Sigmoid colon (tissue), 7 donors: ENCODE measurements at regions of chr11 and their contacts with region 1.

Region 1: GRCh38 chr11:59753650-59754493 is 1.3 kb upstream of the STX3 start:
- DNase-seq: peak; percentile 92
- H3K4me3 ChIP-seq: peak overlapping the region; percentile 67 to 92 (median 76)
- H3K27ac ChIP-seq: peak overlapping the region; percentile 86 to 94 (median 91)
- H3K4me1 ChIP-seq: peaks cover 0 to 22% (median 16%) of the 10 kb centered on the region in 4 donors
- H3K27me3 ChIP-seq: no peaks in the 10 kb centered on the region
- CTCF ChIP-seq: peak; percentile 79 to 94 (median 92)
- EP300 ChIP-seq: no peak
- POLR2A ChIP-seq: no peak

Region 2: DNA sequence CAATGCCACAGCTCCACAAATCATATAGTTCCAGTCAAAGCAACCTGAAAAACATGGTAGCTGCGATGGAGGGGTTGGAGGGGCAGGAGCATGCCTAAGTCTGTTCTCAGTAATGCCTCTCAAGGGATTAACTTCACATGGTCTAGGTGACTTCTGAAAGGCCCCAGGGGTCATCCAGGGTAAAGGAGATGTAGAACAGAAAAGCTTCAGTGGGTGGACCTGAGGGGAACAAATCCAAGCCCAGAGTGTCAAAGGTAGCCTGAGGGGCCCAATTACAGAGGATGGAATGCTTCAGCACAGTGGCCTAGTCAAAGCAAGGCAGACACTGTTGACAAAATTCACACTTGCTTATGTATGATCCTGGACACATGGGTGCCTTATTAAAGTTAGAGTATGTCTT is 219.2 kb before region 1 on chr11:
- intact Hi-C with region 1: loop called (anchors 5 kb)
- DNase-seq: no peak
- H3K4me3 ChIP-seq: no peak overlapping the region
- H3K27ac ChIP-seq: no peak overlapping the region
- H3K4me1 ChIP-seq: peaks cover 0 to 14% (median 7%) of the 10 kb centered on the region in 4 donors
- H3K27me3 ChIP-seq: no peaks in the 10 kb centered on the region
- CTCF ChIP-seq: no peak
- EP300 ChIP-seq: no peak
- POLR2A ChIP-seq: no peak

Region 3: GRCh38 chr11:59641156-59641555 is 112.7 kb before region 1 on chr11:
- intact Hi-C with region 1: no loop called
- DNase-seq: no peak
- H3K4me3 ChIP-seq: no peak overlapping the region
- H3K27ac ChIP-seq: peak overlapping the region in 1 of 4 donors; percentile 9
- H3K4me1 ChIP-seq: peaks cover 0 to 14% (median 3%) of the 10 kb centered on the region in 4 donors
- H3K27me3 ChIP-seq: no peaks in the 10 kb centered on the region
- CTCF ChIP-seq: no peak
- EP300 ChIP-seq: no peak
- POLR2A ChIP-seq: no peak

Region 4: DNA sequence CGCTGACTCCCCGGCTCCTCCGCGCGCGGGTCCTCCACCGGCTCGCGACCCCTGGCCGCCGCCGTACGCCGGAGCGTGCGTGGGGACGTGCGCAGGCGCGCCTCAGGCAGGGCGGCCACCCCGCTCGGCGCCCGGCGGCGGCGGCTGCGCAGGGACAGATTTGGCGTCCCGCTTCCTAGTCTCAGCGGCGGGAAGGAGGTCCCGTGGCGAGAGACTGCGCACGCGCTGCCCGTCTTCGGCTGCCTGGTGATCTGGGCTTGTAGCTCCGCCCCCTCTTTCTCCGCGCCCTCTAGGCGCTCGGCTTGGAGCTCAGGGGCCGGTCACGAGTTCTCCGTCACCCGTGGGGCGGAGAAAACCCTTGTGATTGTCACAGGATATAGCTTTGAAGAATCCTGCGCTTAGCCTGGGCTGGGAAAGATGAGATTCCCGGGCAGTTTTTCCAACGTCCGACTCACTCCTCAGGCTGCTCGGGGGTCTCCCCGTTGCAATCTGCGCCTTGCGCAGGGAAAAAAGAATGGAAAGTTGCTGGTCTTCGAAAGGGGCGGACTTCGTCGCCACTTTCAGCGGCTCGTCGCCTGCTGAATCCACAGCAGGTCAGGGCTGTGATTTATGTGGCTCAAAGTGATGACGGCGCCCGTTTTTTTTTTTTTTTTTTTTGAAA is 84.8 kb before region 1 on chr11 and contains the start of gene PATL1:
- intact Hi-C with region 1: loop called (anchors 1 kb)
- DNase-seq: peak; percentile 100
- H3K4me3 ChIP-seq: peak within 1 kb of the TSS; percentile 81 to 96 (median 91)
- H3K27ac ChIP-seq: peak within 1 kb of the TSS; percentile 91 to 95 (median 94)
- H3K4me1 ChIP-seq: peaks cover 0 to 32% (median 26%) of the 10 kb centered on the region in 4 donors
- H3K27me3 ChIP-seq: no peaks in the 10 kb centered on the region
- CTCF ChIP-seq: no peak
- EP300 ChIP-seq: peak in 3 of 4 donors; percentile 50 to 86 (median 61)
- POLR2A ChIP-seq: peak; percentile 83 to 88
- total RNA-seq, gene PATL1: 11.0 to 16.9 (median 12.3) TPM

Region 5: DNA sequence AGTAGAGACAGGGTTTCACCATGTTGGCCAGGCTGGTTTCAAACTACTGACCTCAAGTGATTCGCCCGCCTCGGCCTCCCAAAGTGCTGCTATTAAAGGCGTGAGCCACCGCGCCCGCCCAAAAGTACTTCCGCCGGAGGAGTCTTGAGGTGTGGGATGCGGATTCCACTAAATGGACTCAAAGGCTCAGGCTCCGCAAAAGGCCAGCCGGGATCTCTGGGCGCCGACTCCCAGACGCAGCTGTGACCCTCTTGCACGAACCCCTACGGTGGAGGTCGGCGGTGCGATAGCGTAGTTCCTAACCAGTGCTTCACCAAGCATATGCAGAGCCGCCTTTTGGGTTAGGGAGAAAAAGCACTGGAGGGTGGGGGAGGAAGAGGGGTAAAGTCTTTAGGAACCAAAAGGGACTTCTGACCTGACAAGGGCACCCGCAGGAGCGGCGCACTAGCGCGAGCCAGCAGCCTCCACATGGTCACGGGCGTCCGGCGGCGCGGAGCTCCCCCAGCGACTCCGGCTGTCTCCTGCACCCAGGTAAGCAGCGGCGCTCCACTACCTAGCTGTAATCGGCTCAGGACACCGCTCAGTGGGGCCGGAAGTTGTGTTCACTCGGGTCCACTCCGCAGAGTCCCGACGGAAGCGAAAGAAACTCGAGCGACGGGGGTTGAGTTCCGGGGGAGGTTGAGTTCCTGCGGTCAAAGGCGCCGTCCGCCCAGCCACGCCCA is 56.5 kb after region 1 on chr11 and contains the start of gene MRPL16:
- intact Hi-C with region 1: loop called (anchors 2 kb)
- DNase-seq: peak; percentile 92
- H3K4me3 ChIP-seq: peak within 1 kb of the TSS; percentile 81 to 97 (median 94)
- H3K27ac ChIP-seq: peak within 1 kb of the TSS; percentile 83 to 88 (median 86)
- H3K4me1 ChIP-seq: peaks cover 0 to 18% (median 13%) of the 10 kb centered on the region in 4 donors
- H3K27me3 ChIP-seq: no peaks in the 10 kb centered on the region
- CTCF ChIP-seq: peak in 1 of 4 experiments; percentile 14
- EP300 ChIP-seq: no peak
- POLR2A ChIP-seq: no peak
- total RNA-seq, gene MRPL16: 41.9 to 52.6 (median 44.9) TPM

Region 6: GRCh38 chr11:60251485-60252212 is 497.8 kb after region 1 on chr11:
- intact Hi-C with region 1: loop called (anchors 5 kb)
- DNase-seq: no peak
- H3K4me3 ChIP-seq: no peak overlapping the region
- H3K27ac ChIP-seq: peak overlapping the region in 1 of 4 donors; percentile 35
- H3K4me1 ChIP-seq: no peaks in the 10 kb centered on the region
- H3K27me3 ChIP-seq: no peaks in the 10 kb centered on the region
- CTCF ChIP-seq: peak in 2 of 4 experiments; percentile 4 to 24
- EP300 ChIP-seq: no peak
- POLR2A ChIP-seq: no peak